ENCODE measurements at regions of chr17 and their contacts with region 1.

Region 1: DNA sequence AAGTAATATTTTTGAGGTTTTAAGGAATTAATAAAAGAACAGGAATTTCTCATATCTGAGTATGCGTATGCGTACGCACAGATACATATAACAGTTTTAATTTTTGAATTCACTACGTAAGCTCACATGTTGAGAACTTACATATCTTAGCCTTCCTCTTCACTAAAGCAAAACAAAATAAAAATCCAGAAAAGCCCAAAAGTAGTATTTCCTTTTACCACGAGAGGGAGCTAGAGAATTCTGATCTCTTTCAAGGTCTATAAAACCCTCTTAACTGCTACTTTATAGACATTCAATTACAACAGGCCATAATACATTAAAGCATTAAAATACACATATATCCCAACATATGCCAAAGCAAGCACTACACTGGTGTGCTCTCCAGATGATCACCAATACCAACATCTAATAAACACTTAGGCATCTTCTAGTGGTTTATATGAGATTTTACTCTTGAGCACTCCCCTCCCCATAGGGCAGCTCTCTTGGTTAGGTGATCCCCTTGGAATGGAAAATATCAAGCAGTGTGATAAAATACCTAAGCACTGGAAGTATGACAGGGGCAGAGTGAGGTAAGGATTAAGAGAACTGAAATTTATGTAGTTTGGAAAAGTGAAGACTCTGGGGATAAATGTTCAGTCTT is 94.0 kb downstream of the SKAP1 start:
- DNase-seq: no peak
- H3K4me3 ChIP-seq: no peak overlapping the region
- CTCF ChIP-seq: peak; percentile 38

Region 2: GRCh38 chr17:48561884-48562810 is 226.2 kb after region 1 on chr17:
- CTCF ChIA-PET with region 1: interaction called, 10 read pairs
- POLR2A ChIA-PET with region 1: no interaction called
- DNase-seq: no peak
- H3K4me3 ChIP-seq: peak overlapping the region; percentile 54
- CTCF ChIP-seq: peak; percentile 63

Region 3: GRCh38 chr17:48586355-48587258 is 250.6 kb after region 1 on chr17:
- CTCF ChIA-PET with region 1: interaction called, 28 read pairs
- POLR2A ChIA-PET with region 1: no interaction called
- DNase-seq: no peak
- H3K4me3 ChIP-seq: peak overlapping the region; percentile 76
- CTCF ChIP-seq: no peak

Region 4: GRCh38 chr17:48610282-48611211 is 274.6 kb after region 1 on chr17 and contains the start of gene HOXB7:
- CTCF ChIA-PET with region 1: interaction called, 185 read pairs
- POLR2A ChIA-PET with region 1: no interaction called
- DNase-seq: no peak
- H3K4me3 ChIP-seq: peak within 1 kb of the TSS; percentile 67
- CTCF ChIP-seq: no peak